CD4-positive, alpha-beta memory T cell (primary cell): ENCODE measurements at regions of chr11 and their contacts with region 1.

Region 1: GRCh38 chr11:406978-407739 is 7.6 kb downstream of the SIGIRR start:
- DNase-seq: peak; percentile 93 to 97 (median 95)
- H3K4me3 ChIP-seq: peak overlapping the region in 1 of 2 donors; percentile 28
- H3K4me3 Mint-ChIP-seq: peak overlapping the region in 5 of 8 donors; percentile 28 to 62 (median 41)
- H3K27ac ChIP-seq: peak overlapping the region; percentile 59
- H3K27ac Mint-ChIP-seq: peak overlapping the region; percentile 22 to 92 (median 72)
- H3K4me1 ChIP-seq: peaks cover 21% of the 10 kb centered on the region
- H3K4me1 Mint-ChIP-seq: peaks cover 0 to 18% (median 9%) of the 10 kb centered on the region in 4 donors
- H3K27me3 ChIP-seq: no peaks in the 10 kb centered on the region
- H3K27me3 Mint-ChIP-seq: no peaks in the 10 kb centered on the region

Region 2: DNA sequence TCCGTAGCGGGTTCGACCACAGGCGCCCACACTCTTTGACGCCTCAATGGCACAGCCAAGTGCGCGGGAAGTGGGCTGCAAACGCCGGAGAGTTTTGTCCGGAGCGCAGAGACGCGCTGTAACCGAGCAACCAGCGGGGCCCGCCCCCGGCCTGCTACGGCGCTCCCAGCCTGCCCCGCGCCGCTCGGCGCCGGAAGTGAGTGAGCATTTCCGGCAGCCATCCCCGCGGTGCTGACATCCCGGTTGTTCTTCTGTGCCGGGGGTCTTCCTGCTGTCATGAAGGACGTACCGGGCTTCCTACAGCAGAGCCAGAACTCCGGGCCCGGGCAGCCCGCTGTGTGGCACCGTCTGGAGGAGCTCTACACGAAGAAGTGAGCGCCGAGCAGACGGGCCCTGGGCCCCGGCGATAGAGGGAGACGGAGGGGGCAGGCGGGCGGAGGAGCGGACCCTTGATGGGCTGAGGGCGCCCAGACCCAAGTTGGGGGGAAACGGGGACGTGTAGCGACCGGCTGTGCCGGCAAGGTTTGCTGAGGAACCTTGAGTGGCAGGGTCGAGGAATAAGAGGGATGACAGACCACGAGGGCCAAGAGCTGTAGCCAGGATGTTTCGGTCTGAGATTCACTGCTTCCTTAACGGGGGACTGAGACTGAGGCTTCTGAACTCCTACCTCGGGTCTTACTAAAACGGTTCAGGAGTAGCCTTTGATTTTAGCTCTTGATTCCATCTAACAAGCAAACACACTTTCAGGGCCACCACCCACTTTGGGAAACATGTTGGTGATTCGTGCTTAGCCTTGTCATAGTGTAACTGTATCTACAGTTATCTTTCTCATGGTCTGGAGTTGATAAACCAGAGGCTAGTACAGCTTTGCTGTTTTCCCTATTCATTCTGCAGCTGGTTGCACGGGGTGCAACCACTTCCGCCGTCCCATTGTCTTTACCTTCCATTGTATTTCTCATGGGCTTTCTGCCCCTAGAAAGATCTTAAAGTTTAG is 170.1 kb before region 1 on chr11 and contains the start of gene PSMD13:
- CTCF ChIA-PET with region 1: interaction called, 3 read pairs
- POLR2A ChIA-PET with region 1: interaction called, 10 read pairs
- intact Hi-C with region 1: no loop called
- DNase-seq: peak; percentile 85 to 90 (median 88)
- H3K4me3 ChIP-seq: peak within 1 kb of the TSS; percentile 96 to 100
- H3K4me3 Mint-ChIP-seq: peak within 1 kb of the TSS; percentile 98 to 100 (median 99)
- H3K27ac ChIP-seq: peak within 1 kb of the TSS; percentile 100
- H3K27ac Mint-ChIP-seq: peak within 1 kb of the TSS; percentile 97 to 100 (median 100)
- H3K4me1 ChIP-seq: peaks cover 22% of the 10 kb centered on the region
- H3K4me1 Mint-ChIP-seq: peaks cover 31 to 64% (median 46%) of the 10 kb centered on the region in 4 donors
- H3K27me3 ChIP-seq: no peaks in the 10 kb centered on the region
- H3K27me3 Mint-ChIP-seq: no peaks in the 10 kb centered on the region
- total RNA-seq, gene PSMD13: 99.9 to 107 TPM

Region 3: GRCh38 chr11:279966-280582 is 127.1 kb before region 1 on chr11:
- CTCF ChIA-PET with region 1: no interaction called
- POLR2A ChIA-PET with region 1: interaction called, 25 read pairs
- intact Hi-C with region 1: no loop called
- DNase-seq: peak in 4 of 5 donors; percentile 55 to 61 (median 57)
- H3K4me3 ChIP-seq: peak overlapping the region in 1 of 2 donors; percentile 59
- H3K4me3 Mint-ChIP-seq: peak overlapping the region; percentile 84 to 91 (median 88)
- H3K27ac ChIP-seq: no peak overlapping the region
- H3K27ac Mint-ChIP-seq: peak overlapping the region in 4 of 7 donors; percentile 70 to 92 (median 84)
- H3K4me1 ChIP-seq: peaks cover 60% of the 10 kb centered on the region
- H3K4me1 Mint-ChIP-seq: peaks cover 30 to 61% (median 46%) of the 10 kb centered on the region in 4 donors
- H3K27me3 ChIP-seq: no peaks in the 10 kb centered on the region
- H3K27me3 Mint-ChIP-seq: no peaks in the 10 kb centered on the region

Region 4: GRCh38 chr11:288328-289144 is 118.6 kb before region 1 on chr11 and contains the start of gene PGGHG:
- CTCF ChIA-PET with region 1: interaction called, 3 read pairs
- POLR2A ChIA-PET with region 1: interaction called, 29 read pairs
- intact Hi-C with region 1: no loop called
- DNase-seq: peak in 3 of 5 donors; percentile 49 to 60 (median 51)
- H3K4me3 ChIP-seq: peak within 1 kb of the TSS; percentile 83 to 95
- H3K4me3 Mint-ChIP-seq: peak within 1 kb of the TSS; percentile 88 to 99 (median 98)
- H3K27ac ChIP-seq: peak within 1 kb of the TSS; percentile 96
- H3K27ac Mint-ChIP-seq: peak within 1 kb of the TSS; percentile 95 to 100 (median 98)
- H3K4me1 ChIP-seq: peaks cover 38% of the 10 kb centered on the region
- H3K4me1 Mint-ChIP-seq: peaks cover 14 to 51% (median 31%) of the 10 kb centered on the region in 4 donors
- H3K27me3 ChIP-seq: no peaks in the 10 kb centered on the region
- H3K27me3 Mint-ChIP-seq: no peaks in the 10 kb centered on the region
- total RNA-seq, gene PGGHG: 304 TPM

Region 5: GRCh38 chr11:385594-386351 is 21.4 kb before region 1 on chr11:
- CTCF ChIA-PET with region 1: no interaction called
- POLR2A ChIA-PET with region 1: no interaction called
- intact Hi-C with region 1: no loop called
- DNase-seq: peak in 1 of 5 donors; percentile 31
- H3K4me3 ChIP-seq: no peak overlapping the region
- H3K4me3 Mint-ChIP-seq: no peak overlapping the region
- H3K27ac ChIP-seq: no peak overlapping the region
- H3K27ac Mint-ChIP-seq: no peak overlapping the region
- H3K4me1 ChIP-seq: no peaks in the 10 kb centered on the region
- H3K4me1 Mint-ChIP-seq: peaks cover 3 to 18% (median 6%) of the 10 kb centered on the region in 4 donors
- H3K27me3 ChIP-seq: no peaks in the 10 kb centered on the region
- H3K27me3 Mint-ChIP-seq: peaks cover 0 to 8% of the 10 kb centered on the region in 2 donors

Region 6: DNA sequence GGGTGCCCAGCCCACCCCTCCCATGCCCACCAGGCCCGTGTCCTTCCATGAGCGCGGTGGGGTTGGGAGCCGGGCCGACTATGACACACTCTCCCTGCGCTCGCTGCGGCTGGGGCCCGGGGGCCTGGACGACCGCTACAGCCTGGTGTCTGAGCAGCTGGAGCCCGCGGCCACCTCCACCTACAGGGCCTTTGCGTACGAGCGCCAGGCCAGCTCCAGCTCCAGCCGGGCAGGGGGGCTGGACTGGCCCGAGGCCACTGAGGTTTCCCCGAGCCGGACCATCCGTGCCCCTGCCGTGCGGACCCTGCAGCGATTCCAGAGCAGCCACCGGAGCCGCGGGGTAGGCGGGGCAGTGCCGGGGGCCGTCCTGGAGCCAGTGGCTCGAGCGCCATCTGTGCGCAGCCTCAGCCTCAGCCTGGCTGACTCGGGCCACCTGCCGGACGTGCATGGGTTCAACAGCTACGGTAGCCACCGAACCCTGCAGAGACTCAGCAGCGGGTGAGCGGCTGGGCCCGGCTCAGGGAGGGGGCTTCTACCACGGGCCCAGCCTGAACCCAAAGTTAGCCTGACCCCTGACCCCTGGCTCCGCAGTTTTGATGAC is 10.1 kb before region 1 on chr11:
- CTCF ChIA-PET with region 1: interaction called, 10 read pairs
- POLR2A ChIA-PET with region 1: interaction called, 22 read pairs
- intact Hi-C with region 1: no loop called
- DNase-seq: peak; percentile 41 to 57 (median 46)
- H3K4me3 ChIP-seq: peak overlapping the region in 1 of 2 donors; percentile 35
- H3K4me3 Mint-ChIP-seq: peak overlapping the region in 5 of 8 donors; percentile 13 to 54 (median 21)
- H3K27ac ChIP-seq: no peak overlapping the region
- H3K27ac Mint-ChIP-seq: no peak overlapping the region
- H3K4me1 ChIP-seq: peaks cover 4% of the 10 kb centered on the region
- H3K4me1 Mint-ChIP-seq: peaks cover 0 to 10% (median 0%) of the 10 kb centered on the region in 4 donors
- H3K27me3 ChIP-seq: no peaks in the 10 kb centered on the region
- H3K27me3 Mint-ChIP-seq: no peaks in the 10 kb centered on the region

Region 7: GRCh38 chr11:455566-456147 is 48.5 kb after region 1 on chr11:
- CTCF ChIA-PET with region 1: interaction called, 103 read pairs
- POLR2A ChIA-PET with region 1: interaction called, 539 read pairs
- intact Hi-C with region 1: no loop called
- DNase-seq: no peak
- H3K4me3 ChIP-seq: no peak overlapping the region
- H3K4me3 Mint-ChIP-seq: no peak overlapping the region
- H3K27ac ChIP-seq: no peak overlapping the region
- H3K27ac Mint-ChIP-seq: peak overlapping the region in 5 of 7 donors; percentile 29 to 88 (median 83)
- H3K4me1 ChIP-seq: peaks cover 33% of the 10 kb centered on the region
- H3K4me1 Mint-ChIP-seq: peaks cover 27 to 47% (median 37%) of the 10 kb centered on the region in 4 donors
- H3K27me3 ChIP-seq: no peaks in the 10 kb centered on the region
- H3K27me3 Mint-ChIP-seq: no peaks in the 10 kb centered on the region

Region 8: GRCh38 chr11:506238-506994 is 99.3 kb after region 1 on chr11:
- CTCF ChIA-PET with region 1: no interaction called
- POLR2A ChIA-PET with region 1: interaction called, 12 read pairs
- intact Hi-C with region 1: loop called (anchors 2 kb)
- DNase-seq: peak; percentile 94 to 98 (median 97)
- H3K4me3 ChIP-seq: peak overlapping the region; percentile 91 to 99
- H3K4me3 Mint-ChIP-seq: peak overlapping the region; percentile 95 to 100 (median 98)
- H3K27ac ChIP-seq: peak overlapping the region; percentile 100
- H3K27ac Mint-ChIP-seq: peak overlapping the region; percentile 100
- H3K4me1 ChIP-seq: peaks cover 35% of the 10 kb centered on the region
- H3K4me1 Mint-ChIP-seq: peaks cover 6 to 42% (median 25%) of the 10 kb centered on the region in 4 donors
- H3K27me3 ChIP-seq: no peaks in the 10 kb centered on the region
- H3K27me3 Mint-ChIP-seq: no peaks in the 10 kb centered on the region